ENCODE measurements at regions of chr2 and their contacts with region 1.

Region 1: GRCh38 chr2:11477994-11478393 is 12.0 kb upstream of the E2F6 start:
- DNase-seq: peak; percentile 78 to 90
- ATAC-seq: peak in 6 of 8 donors; percentile 39 to 79 (median 76)
- H3K4me3 ChIP-seq: no peak overlapping the region
- H3K27ac ChIP-seq: no peak overlapping the region
- H3K4me1 ChIP-seq: peaks cover 0 to 6% (median under 1%) of the 10 kb centered on the region in 9 donors
- H3K27me3 ChIP-seq: peaks cover 0 to 41% (median 11%) of the 10 kb centered on the region in 7 donors
- CTCF ChIP-seq: peak; percentile 76 to 92 (median 90)

Region 2: GRCh38 chr2:10091182-10091888 is 1386.7 kb before region 1 on chr2:
- intact Hi-C with region 1: no loop called
- DNase-seq: peak in 1 of 2 donors; percentile 25
- ATAC-seq: peak in 6 of 8 donors; percentile 28 to 73 (median 48)
- H3K4me3 ChIP-seq: peak overlapping the region in 9 of 10 donors; percentile 18 to 56 (median 32)
- H3K27ac ChIP-seq: no peak overlapping the region
- H3K4me1 ChIP-seq: peaks cover 0 to 8% (median 5%) of the 10 kb centered on the region in 9 donors
- H3K27me3 ChIP-seq: peaks cover 0 to 64% (median 48%) of the 10 kb centered on the region in 7 donors
- CTCF ChIP-seq: no peak

Region 3: GRCh38 chr2:11583840-11584524 is 106.0 kb after region 1 on chr2:
- intact Hi-C with region 1: loop called (anchors 1 to 5 kb)
- DNase-seq: peak; percentile 61 to 78
- ATAC-seq: peak; percentile 54 to 83 (median 79)
- H3K4me3 ChIP-seq: no peak overlapping the region
- H3K27ac ChIP-seq: peak overlapping the region in 8 of 10 donors; percentile 3 to 74 (median 56)
- H3K4me1 ChIP-seq: peaks cover 0 to 20% (median 6%) of the 10 kb centered on the region in 9 donors
- H3K27me3 ChIP-seq: no peaks in the 10 kb centered on the region
- CTCF ChIP-seq: peak; percentile 50 to 85 (median 81)

Region 4: DNA sequence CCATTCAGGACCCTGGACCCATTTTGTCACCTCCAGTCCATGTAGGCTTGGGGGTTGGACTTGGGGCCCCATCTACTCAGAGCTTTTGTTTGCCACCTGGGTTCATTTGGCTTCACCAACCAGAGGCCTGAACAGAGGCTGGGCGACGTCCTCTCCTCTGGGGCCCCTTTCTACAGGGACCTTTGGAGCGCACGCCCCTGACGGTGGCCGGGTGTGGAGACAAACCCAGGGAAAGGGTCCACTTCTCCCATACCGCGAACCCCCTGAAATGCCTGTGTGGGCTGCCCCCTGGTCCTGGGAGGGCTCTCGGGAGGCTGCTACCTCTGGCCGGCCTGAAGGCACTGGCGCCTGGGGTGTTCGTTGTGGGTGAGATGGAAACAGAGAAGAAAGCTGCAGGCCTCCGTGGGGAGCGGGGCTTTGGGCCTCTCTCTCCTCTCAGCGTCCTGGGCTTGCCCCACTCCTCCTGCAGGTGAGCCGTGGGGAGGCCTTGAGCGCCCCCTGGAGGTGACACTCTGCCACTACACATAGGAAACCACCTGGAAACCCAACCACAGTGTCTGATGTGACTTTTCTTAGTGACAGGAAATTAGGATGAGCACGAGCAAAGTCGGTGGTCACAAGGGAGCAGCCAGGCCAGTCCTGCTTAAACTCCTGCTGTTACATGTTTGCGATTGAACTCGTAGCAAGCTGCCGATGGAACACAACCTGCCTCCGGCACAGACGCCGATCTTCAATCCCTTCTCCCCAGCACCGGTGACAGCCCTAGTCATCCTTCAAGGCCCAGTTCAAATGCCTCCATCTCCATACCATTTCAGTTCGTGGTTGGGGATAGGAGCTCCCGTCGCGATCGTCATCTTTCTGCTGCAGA is 204.0 kb after region 1 on chr2:
- intact Hi-C with region 1: loop called in 4 of 10 experiments (anchors 5 to 10 kb)
- DNase-seq: no peak
- ATAC-seq: peak in 3 of 8 donors; percentile 16 to 34 (median 31)
- H3K4me3 ChIP-seq: no peak overlapping the region
- H3K27ac ChIP-seq: no peak overlapping the region
- H3K4me1 ChIP-seq: peaks cover 0 to 7% (median 0%) of the 10 kb centered on the region in 9 donors
- H3K27me3 ChIP-seq: peaks cover 0 to 31% (median 19%) of the 10 kb centered on the region in 7 donors
- CTCF ChIP-seq: peak; percentile 37 to 79 (median 70)

Region 5: DNA sequence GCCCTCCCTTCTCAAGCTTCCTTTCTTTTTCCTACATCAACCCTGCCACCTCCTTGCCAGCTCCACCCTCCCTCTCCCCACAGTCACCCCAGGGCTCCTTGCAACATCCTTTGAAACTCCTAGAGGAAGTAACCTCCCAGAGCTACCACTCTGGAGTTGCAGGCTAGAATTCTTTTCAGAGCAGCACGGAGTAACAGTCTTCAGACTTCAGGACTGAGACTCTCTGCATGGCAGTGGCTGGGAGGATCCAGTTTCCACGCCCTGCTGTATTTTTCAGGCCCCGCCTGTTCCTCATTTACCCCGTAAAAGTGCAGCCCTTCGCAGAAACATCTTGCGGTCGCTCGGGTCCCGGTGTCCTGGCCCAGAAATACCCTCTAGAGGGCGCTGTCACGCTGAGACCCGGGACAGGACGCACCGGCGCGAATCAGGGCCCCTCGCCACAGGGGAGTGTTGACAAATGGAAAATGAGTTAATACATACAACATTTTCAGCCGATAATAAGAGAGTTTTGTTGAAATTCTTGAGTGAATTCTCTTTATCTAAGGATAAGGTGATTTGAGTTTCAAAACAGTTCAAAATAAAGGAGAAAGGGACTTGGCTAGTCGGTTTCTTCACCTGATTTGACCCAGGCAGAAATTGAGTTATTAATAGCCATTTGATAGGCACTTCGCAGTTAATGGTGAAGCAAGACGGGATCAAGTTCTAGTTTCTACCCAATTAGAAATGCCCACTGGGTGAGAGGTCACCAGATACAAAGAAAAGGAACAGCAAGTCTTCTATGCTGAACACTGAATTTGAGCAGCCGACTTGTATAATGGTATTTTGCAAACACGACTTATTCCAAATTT is 210.5 kb after region 1 on chr2:
- intact Hi-C with region 1: loop called in 4 of 10 experiments (anchors 5 to 10 kb)
- DNase-seq: peak; percentile 80 to 84
- ATAC-seq: peak; percentile 81 to 94 (median 88)
- H3K4me3 ChIP-seq: peak overlapping the region in 8 of 10 donors; percentile 4 to 43 (median 31)
- H3K27ac ChIP-seq: peak overlapping the region in 8 of 10 donors; percentile 1 to 69 (median 44)
- H3K4me1 ChIP-seq: peaks cover 0 to 32% (median 19%) of the 10 kb centered on the region in 9 donors
- H3K27me3 ChIP-seq: peaks cover 0 to 17% (median 9%) of the 10 kb centered on the region in 7 donors
- CTCF ChIP-seq: peak; percentile 71 to 93 (median 88)

Region 6: DNA sequence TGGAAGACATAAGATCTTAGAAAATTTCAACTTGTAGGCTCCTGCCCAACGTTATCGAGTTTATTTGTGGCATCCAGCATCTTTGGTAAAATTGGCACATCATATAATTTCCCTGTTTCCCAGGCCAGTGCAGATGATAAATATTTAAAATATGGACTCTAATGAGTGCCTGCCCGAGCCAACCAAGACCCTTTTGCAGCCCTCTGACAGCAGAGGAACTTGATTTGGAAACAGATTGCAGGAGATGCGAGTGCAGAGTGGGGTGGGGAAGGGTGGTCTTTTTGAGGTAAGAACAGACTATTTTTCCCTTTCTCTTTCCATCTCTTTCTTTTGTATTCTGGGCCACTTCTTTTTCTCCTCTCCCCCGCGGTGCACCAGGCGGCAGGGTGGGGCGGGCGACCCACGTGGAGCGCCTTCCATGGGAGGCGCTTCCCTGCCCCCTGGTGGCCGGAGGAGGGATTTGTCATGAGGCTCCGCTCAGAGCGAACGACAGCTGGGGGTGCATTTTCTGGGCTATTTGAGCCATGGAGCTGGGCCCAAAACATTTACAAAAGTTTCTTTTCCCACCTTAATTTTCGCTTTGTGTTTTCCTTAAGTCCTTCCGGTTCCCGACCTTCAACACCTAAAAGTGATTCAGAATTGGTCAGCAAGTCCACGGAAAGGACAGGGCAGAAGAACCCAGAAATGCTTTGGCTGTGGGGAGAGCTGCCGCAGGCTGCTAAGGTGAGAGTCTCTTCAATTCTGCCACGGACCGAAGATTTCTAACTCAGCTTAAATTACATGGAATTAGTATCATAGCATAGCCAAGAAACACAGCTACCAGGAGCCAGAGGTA is 301.1 kb after region 1 on chr2:
- intact Hi-C with region 1: loop called in 8 of 10 experiments (anchors 5 to 10 kb)
- DNase-seq: peak; percentile 79 to 85
- ATAC-seq: peak; percentile 90 to 94 (median 92)
- H3K4me3 ChIP-seq: peak overlapping the region in 6 of 10 donors; percentile 16 to 36 (median 24)
- H3K27ac ChIP-seq: peak overlapping the region in 1 of 10 donors; percentile 54
- H3K4me1 ChIP-seq: peaks cover 0 to 36% (median 20%) of the 10 kb centered on the region in 9 donors
- H3K27me3 ChIP-seq: no peaks in the 10 kb centered on the region
- CTCF ChIP-seq: peak; percentile 96 to 99 (median 97)

Region 7: DNA sequence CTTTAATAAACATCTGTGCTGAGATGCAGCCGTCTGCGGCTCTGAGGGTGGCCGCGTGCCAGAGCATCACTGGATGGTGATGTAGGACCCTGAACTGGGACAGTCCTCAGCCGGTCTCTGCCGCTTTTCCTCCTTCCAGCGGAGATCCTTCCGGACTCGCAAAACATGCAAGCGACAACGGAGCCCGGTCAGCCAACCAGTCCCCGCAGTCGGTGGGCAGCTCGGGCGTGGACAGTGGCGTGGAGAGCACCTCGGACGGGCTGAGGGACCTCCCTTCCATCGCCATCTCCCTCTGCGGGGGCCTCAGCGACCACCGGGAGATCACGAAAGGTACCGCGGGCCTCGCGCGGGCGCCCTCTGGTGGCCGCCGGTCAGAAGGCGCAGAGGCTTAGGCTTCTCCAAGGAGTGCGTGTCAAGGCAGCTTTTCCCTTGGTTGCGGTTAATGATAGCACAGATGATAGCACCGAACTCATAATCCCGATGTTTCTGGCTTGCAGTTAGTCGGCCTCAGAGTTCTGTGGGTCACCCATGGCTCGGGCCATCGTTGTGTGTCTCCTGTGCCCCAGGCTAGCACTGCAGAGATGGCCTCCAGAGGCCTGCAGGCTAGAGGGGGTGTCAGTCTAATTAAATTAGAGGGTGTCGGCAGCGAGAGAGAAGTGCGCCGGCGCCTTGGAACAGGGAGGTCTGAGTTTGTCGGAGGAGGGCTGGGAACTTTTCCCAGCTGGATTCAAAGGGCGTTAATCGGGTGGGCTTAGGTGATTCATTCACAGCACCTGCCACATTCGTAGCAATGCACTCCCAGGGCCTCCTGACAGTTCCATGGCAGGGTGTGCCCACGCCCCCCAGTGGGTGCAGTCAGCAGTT is 307.0 kb after region 1 on chr2:
- intact Hi-C with region 1: loop called in 1 of 10 experiments (anchors 10 kb)
- DNase-seq: peak; percentile 18 to 49
- ATAC-seq: peak; percentile 41 to 78 (median 71)
- H3K4me3 ChIP-seq: peak overlapping the region in 7 of 10 donors; percentile 8 to 55 (median 48)
- H3K27ac ChIP-seq: no peak overlapping the region
- H3K4me1 ChIP-seq: peaks cover 0 to 10% (median 0%) of the 10 kb centered on the region in 9 donors
- H3K27me3 ChIP-seq: no peaks in the 10 kb centered on the region
- CTCF ChIP-seq: peak; percentile 88 to 98 (median 95)

Region 8: GRCh38 chr2:11904029-11904428 is 426.0 kb after region 1 on chr2:
- intact Hi-C with region 1: no loop called
- DNase-seq: no peak
- ATAC-seq: no peak
- H3K4me3 ChIP-seq: no peak overlapping the region
- H3K27ac ChIP-seq: no peak overlapping the region
- H3K4me1 ChIP-seq: peaks cover 0 to 43% (median 0%) of the 10 kb centered on the region in 9 donors
- H3K27me3 ChIP-seq: no peaks in the 10 kb centered on the region
- CTCF ChIP-seq: no peak

Measured in heart right ventricle (tissue), 16 donors.